Endothelial cell of umbilical vein (primary cell): ENCODE measurements at regions of chr5 and their contacts with region 1.

Region 1: GRCh38 chr5:108079753-108080152 is 302.1 kb downstream of the FBXL17 start:
- DNase-seq: no peak
- H3K4me3 ChIP-seq: no peak overlapping the region
- H3K27ac ChIP-seq: no peak overlapping the region
- H3K4me1 ChIP-seq: no peaks in the 10 kb centered on the region
- H3K27me3 ChIP-seq: no peaks in the 10 kb centered on the region
- CTCF ChIP-seq: no peak
- POLR2A ChIP-seq: no peak

Region 2: DNA sequence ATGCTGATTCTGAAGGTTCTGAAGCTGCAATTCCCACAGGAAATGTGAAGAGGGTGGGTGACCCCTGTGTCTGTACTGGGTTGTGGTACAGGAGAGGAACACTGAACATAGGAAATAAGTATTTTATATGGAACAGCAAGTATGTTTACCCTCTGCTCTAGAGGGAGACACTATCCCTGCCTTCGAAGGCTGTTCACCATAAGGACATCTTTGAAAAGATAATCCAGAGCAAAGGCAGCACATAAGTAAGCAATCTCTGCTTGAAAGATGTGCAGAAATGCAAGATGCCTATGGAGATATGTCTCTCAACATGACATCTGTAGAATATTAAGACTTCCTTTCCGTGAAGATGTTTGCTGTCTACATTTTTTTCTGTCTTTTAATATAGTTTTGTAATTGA is 224.6 kb before region 1 on chr5:
- CTCF ChIA-PET with region 1: no interaction called
- POLR2A ChIA-PET with region 1: no interaction called
- dilution Hi-C with region 1: no loop called
- intact Hi-C with region 1: loop called (anchors 10 kb)
- DNase-seq: no peak
- H3K4me3 ChIP-seq: no peak overlapping the region
- H3K27ac ChIP-seq: no peak overlapping the region
- H3K4me1 ChIP-seq: no peaks in the 10 kb centered on the region
- H3K27me3 ChIP-seq: no peaks in the 10 kb centered on the region
- CTCF ChIP-seq: no peak
- POLR2A ChIP-seq: no peak

Region 3: DNA sequence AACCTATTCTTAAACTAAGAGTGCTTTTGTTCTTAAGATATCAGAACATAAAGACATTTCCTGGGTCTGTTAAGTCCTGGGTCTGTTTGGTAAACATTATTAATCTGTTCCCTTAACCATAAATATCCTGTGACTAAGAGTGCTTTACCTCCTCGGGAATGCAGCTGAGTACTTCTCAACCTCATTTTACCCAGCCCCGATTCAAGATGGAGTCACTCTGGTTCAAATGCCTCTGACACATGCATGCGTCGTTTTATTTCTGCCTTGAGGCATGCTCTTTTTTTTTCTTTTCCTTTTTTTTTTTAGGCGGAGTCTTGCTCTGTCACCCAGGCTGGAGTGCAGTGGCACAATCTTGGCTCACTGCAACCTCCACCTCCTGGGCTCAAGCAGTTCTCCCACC is 342.0 kb after region 1 on chr5:
- CTCF ChIA-PET with region 1: no interaction called
- POLR2A ChIA-PET with region 1: no interaction called
- dilution Hi-C with region 1: no loop called
- intact Hi-C with region 1: no loop called
- DNase-seq: no peak
- H3K4me3 ChIP-seq: no peak overlapping the region
- H3K27ac ChIP-seq: no peak overlapping the region
- H3K4me1 ChIP-seq: no peaks in the 10 kb centered on the region
- H3K27me3 ChIP-seq: no peaks in the 10 kb centered on the region
- CTCF ChIP-seq: no peak
- POLR2A ChIP-seq: no peak